ENCODE measurements at regions of chr22 and their contacts with region 1.

Region 1: GRCh38 chr22:22349455-22349836 is 104.9 kb downstream of the VPREB1 start:
- DNase-seq: no peak
- ATAC-seq: no peak
- H3K4me3 Mint-ChIP-seq: no peak overlapping the region
- H3K27ac Mint-ChIP-seq: no peak overlapping the region
- H3K4me1 Mint-ChIP-seq: peaks cover 1% of the 10 kb centered on the region
- H3K27me3 Mint-ChIP-seq: peaks cover 17% of the 10 kb centered on the region

Region 2: DNA sequence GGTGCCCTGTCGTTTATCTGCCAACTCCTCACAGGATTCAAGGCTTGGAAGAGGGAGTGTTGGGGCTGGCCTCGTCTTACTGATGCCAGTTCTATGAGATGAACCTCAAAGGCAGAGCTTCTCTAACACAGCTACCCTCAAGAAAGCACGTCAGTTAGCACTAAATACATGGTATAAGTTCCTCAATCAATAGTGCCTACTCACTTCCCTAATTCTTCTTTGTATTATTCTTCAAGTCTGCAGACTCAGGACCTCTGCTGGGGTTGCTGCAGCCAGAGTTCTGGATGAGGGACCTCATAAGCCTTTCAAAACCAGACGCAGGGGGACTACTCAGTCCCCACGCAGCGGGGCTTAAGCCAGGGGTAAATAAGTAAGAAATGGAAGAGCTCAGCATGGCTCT is 13.5 kb after region 1 on chr22:
- CTCF ChIA-PET with region 1: no interaction called
- POLR2A ChIA-PET with region 1: no interaction called
- intact Hi-C with region 1: no loop called
- DNase-seq: no peak
- ATAC-seq: no peak
- H3K4me3 Mint-ChIP-seq: no peak overlapping the region
- H3K27ac Mint-ChIP-seq: no peak overlapping the region
- H3K4me1 Mint-ChIP-seq: no peaks in the 10 kb centered on the region
- H3K27me3 Mint-ChIP-seq: peaks cover 29% of the 10 kb centered on the region

Region 3: GRCh38 chr22:22397277-22397870 is 47.9 kb after region 1 on chr22:
- CTCF ChIA-PET with region 1: interaction called, 4 read pairs
- POLR2A ChIA-PET with region 1: no interaction called
- intact Hi-C with region 1: loop called (anchors 1 kb)
- DNase-seq: no peak
- ATAC-seq: no peak
- H3K4me3 Mint-ChIP-seq: no peak overlapping the region
- H3K27ac Mint-ChIP-seq: no peak overlapping the region
- H3K4me1 Mint-ChIP-seq: no peaks in the 10 kb centered on the region
- H3K27me3 Mint-ChIP-seq: peaks cover 4% of the 10 kb centered on the region

Region 4: DNA sequence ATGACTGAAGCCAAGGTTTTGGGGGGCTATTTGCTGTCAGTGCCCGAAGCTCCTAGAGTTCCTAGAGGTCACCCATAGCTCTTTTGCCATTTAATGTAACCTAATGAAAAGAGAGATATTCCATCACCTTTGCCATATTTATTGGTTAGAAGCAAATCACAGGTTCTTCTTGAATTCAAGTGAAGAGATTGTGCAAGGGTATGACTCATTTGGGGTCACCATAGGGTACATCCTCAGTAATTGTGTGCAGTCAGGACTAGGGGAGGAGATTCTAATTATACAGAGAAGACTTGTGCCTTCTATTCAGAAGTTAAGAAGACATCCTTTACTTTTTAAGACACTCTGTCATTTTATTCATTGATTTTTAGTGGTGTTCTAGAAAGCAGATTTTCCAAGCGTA is 216.5 kb after region 1 on chr22:
- CTCF ChIA-PET with region 1: no interaction called
- POLR2A ChIA-PET with region 1: no interaction called
- intact Hi-C with region 1: no loop called
- DNase-seq: no peak
- ATAC-seq: no peak
- H3K4me3 Mint-ChIP-seq: no peak overlapping the region
- H3K27ac Mint-ChIP-seq: no peak overlapping the region
- H3K4me1 Mint-ChIP-seq: no peaks in the 10 kb centered on the region
- H3K27me3 Mint-ChIP-seq: peaks cover 24% of the 10 kb centered on the region

Measured in activated CD4-positive, alpha-beta T cell treated with anti-CD3 and anti-CD28 coated beads for 36 hours (primary cell).